ENCODE measurements at regions of chr9 and their contacts with region 1.

Region 1: DNA sequence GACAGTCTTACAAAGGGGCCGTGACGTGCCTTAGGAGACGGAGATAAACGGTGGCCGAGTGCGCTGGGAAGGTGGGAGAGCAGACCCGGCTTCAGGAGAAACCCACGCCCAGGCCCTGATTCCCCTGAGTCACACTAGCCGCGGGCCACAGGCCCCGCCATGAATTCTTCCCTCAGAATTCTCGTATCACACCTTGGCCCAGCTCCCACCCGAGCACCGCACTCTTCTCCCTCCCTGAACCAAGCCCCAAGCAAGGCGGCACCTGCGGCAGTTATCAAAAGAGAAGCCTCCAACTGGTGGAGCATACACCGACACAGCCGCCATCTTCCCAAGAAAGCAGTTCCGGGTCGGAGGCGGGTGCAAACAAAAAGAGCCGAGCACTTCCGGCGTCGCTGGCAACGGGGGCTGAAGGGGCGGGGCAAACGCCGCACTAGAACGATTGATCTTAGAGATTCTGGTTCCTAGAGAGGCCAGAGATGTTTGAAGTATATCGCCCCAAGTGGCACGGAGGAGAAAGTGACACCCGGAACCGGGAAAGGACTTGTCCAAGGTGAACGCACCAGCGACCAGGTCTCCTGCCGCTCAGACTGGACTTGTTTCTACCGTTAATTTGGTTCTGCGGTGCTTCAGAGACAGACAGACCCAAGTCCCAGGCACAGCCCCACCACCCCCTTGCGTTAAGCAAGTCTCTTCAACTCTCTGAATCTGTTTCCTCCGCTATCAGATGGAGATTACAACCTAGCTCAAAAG is at the start of gene PSMB7:
- DNase-seq: peak; percentile 80 to 97
- H3K4me3 ChIP-seq: peak within 1 kb of the TSS; percentile 78 to 93
- H3K27ac ChIP-seq: peak within 1 kb of the TSS in 1 of 2 donors; percentile 44
- H3K4me1 ChIP-seq: peaks cover 4 to 10% of the 10 kb centered on the region in 2 donors
- H3K27me3 ChIP-seq: no peaks in the 10 kb centered on the region
- CTCF ChIP-seq: peak; percentile 79 to 87 (median 84)
- total RNA-seq, gene PSMB7: 21.1 TPM

Region 2: GRCh38 chr9:123929870-123930831 is 485.1 kb before region 1 on chr9 and contains the start of gene DENND1A:
- intact Hi-C with region 1: loop called (anchors 10 kb)
- DNase-seq: peak; percentile 72 to 94
- H3K4me3 ChIP-seq: peak within 1 kb of the TSS; percentile 71 to 95
- H3K27ac ChIP-seq: peak within 1 kb of the TSS; percentile 4 to 62
- H3K4me1 ChIP-seq: peaks cover 2 to 6% of the 10 kb centered on the region in 2 donors
- H3K27me3 ChIP-seq: no peaks in the 10 kb centered on the region
- CTCF ChIP-seq: no peak
- total RNA-seq, gene DENND1A: 37.3 TPM

Region 3: GRCh38 chr9:124164811-124165210 is 250.5 kb before region 1 on chr9:
- intact Hi-C with region 1: no loop called
- DNase-seq: peak in 1 of 2 donors; percentile 64
- H3K4me3 ChIP-seq: no peak overlapping the region
- H3K27ac ChIP-seq: no peak overlapping the region
- H3K4me1 ChIP-seq: no peaks in the 10 kb centered on the region
- H3K27me3 ChIP-seq: no peaks in the 10 kb centered on the region
- CTCF ChIP-seq: no peak

Region 4: GRCh38 chr9:124285903-124286291 is 129.4 kb before region 1 on chr9:
- intact Hi-C with region 1: loop called (anchors 10 kb)
- DNase-seq: peak; percentile 55 to 88
- H3K4me3 ChIP-seq: no peak overlapping the region
- H3K27ac ChIP-seq: peak overlapping the region; percentile 88 to 93
- H3K4me1 ChIP-seq: peaks cover 16 to 52% of the 10 kb centered on the region in 2 donors
- H3K27me3 ChIP-seq: no peaks in the 10 kb centered on the region
- CTCF ChIP-seq: no peak

Region 5: GRCh38 chr9:124353811-124354274 is 61.4 kb before region 1 on chr9:
- intact Hi-C with region 1: no loop called
- DNase-seq: no peak
- H3K4me3 ChIP-seq: no peak overlapping the region
- H3K27ac ChIP-seq: no peak overlapping the region
- H3K4me1 ChIP-seq: no peaks in the 10 kb centered on the region
- H3K27me3 ChIP-seq: no peaks in the 10 kb centered on the region
- CTCF ChIP-seq: no peak

Region 6: GRCh38 chr9:124861342-124862229 is 446.3 kb after region 1 on chr9 and contains the starts of genes ARPC5L and RPL35:
- intact Hi-C with region 1: loop called (anchors 5 kb)
- DNase-seq: peak; percentile 74 to 97
- H3K4me3 ChIP-seq: peak within 1 kb of the TSS; percentile 88 to 98
- H3K27ac ChIP-seq: peak within 1 kb of the TSS; percentile 90 to 97
- H3K4me1 ChIP-seq: peaks cover 8 to 13% of the 10 kb centered on the region in 2 donors
- H3K27me3 ChIP-seq: no peaks in the 10 kb centered on the region
- CTCF ChIP-seq: peak in 2 of 3 experiments; percentile 24 to 25
- total RNA-seq, gene ARPC5L: 12.0 TPM
- total RNA-seq, gene RPL35: 2,123 TPM